Naive thymus-derived CD4-positive, alpha-beta T cell (primary cell): ENCODE measurements at regions of chr6 and their contacts with region 1.

Region 1: DNA sequence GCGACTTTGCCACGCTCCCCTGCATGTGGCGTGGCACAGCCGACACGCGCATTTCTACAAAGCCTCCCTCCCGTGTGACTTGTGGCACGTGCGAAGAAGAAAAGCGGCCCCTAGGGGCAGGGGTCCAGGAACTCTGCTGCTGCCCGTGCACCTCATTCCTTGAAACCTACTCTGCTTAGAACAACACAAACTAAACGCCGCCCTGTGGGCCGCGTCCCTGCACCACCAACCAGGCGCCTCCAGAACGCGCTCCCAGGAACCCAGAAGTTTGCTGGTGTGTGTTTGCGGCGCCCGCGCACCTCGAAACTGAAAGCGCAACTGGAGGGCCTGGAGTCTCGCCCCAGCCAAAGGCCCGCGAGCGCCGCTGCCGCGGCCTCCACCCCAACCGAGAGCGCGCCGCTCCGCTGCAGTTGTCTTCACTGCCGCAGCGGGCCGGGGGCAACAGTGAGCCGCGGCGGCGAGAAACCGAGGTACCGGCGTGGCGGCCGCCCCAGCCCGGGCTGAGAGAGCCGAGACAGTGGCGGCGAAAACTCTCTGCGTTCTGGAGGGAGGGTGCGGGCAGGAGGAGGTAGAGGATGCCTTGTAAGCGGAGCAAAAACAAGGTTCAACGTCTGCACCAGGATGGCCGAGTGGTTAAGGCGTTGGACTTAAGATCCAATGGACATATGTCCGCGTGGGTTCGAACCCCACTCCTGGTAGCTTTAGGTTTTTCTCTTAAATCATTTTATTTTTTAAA is 65.8 kb downstream of the STX11 start:
- DNase-seq: peak; percentile 84 to 96 (median 94)
- ATAC-seq: peak; percentile 91
- H3K4me3 ChIP-seq: peak overlapping the region; percentile 73
- H3K4me3 Mint-ChIP-seq: peak overlapping the region; percentile 84 to 99 (median 97)
- H3K27ac ChIP-seq: peak overlapping the region; percentile 86
- H3K27ac Mint-ChIP-seq: peak overlapping the region; percentile 91 to 100 (median 100)
- H3K4me1 ChIP-seq: peaks cover 15 to 18% of the 10 kb centered on the region in 2 donors
- H3K4me1 Mint-ChIP-seq: peaks cover 12 to 48% (median 40%) of the 10 kb centered on the region in 7 donors
- H3K27me3 ChIP-seq: no peaks in the 10 kb centered on the region
- H3K27me3 Mint-ChIP-seq: peaks cover 0 to 12% (median 0%) of the 10 kb centered on the region in 5 donors

Region 2: GRCh38 chr6:143549221-143549941 is 666.7 kb before region 1 on chr6:
- CTCF ChIA-PET with region 1: no interaction called
- POLR2A ChIA-PET with region 1: no interaction called
- intact Hi-C with region 1: loop called in 1 of 2 experiments (anchors 10 kb)
- DNase-seq: peak in 1 of 9 donors; percentile 45
- ATAC-seq: peak; percentile 47
- H3K4me3 ChIP-seq: no peak overlapping the region
- H3K4me3 Mint-ChIP-seq: peak overlapping the region in 3 of 10 donors; percentile 4 to 43 (median 10)
- H3K27ac ChIP-seq: no peak overlapping the region
- H3K27ac Mint-ChIP-seq: peak overlapping the region in 4 of 9 donors; percentile 20 to 66 (median 66)
- H3K4me1 ChIP-seq: peaks cover 43 to 71% of the 10 kb centered on the region in 2 donors
- H3K4me1 Mint-ChIP-seq: peaks cover 37 to 86% (median 73%) of the 10 kb centered on the region in 7 donors
- H3K27me3 ChIP-seq: no peaks in the 10 kb centered on the region
- H3K27me3 Mint-ChIP-seq: no peaks in the 10 kb centered on the region

Region 3: DNA sequence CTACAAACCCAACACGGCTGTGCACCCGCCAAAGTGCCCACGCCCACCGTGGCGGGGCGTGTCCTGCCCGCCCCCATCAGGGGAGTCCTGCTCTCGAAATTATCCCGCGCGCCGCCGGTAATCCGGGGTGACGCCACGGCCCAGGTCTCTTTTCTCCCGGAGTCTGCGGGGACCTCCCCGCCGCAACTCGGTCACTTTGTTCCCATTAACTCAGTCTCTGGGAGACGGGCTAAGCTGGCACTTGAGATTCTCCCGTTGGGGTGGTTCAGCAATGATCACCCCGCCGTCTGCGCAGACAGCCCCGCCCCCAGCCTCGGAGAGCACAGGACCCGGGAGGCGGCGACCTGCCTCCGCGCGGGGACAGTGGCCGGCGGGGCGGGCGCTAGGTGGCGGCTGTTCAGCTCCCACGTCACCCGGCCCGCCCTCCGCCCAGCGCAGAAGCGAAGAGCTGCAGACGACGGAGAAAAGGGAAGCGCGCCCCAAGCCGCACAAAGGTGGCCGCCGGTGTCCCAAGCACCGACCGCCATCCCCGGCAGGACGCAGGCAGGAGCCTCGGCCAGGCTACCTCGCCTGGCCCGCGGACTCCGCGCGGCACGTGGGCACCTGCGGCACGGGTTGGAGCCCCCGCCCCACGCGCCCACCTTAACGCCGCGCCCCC is 152.2 kb before region 1 on chr6:
- CTCF ChIA-PET with region 1: no interaction called
- POLR2A ChIA-PET with region 1: no interaction called
- intact Hi-C with region 1: loop called (anchors 1 kb)
- DNase-seq: peak; percentile 84 to 91 (median 88)
- ATAC-seq: peak; percentile 96
- H3K4me3 ChIP-seq: peak overlapping the region; percentile 56
- H3K4me3 Mint-ChIP-seq: peak overlapping the region; percentile 87 to 94 (median 91)
- H3K27ac ChIP-seq: peak overlapping the region; percentile 85
- H3K27ac Mint-ChIP-seq: peak overlapping the region; percentile 83 to 97 (median 88)
- H3K4me1 ChIP-seq: peaks cover 0 to 12% of the 10 kb centered on the region in 2 donors
- H3K4me1 Mint-ChIP-seq: peaks cover 17 to 44% (median 29%) of the 10 kb centered on the region in 7 donors
- H3K27me3 ChIP-seq: no peaks in the 10 kb centered on the region
- H3K27me3 Mint-ChIP-seq: peaks cover 0 to 2% (median 0%) of the 10 kb centered on the region in 5 donors

Region 4: GRCh38 chr6:144181639-144182038 is 34.5 kb before region 1 on chr6:
- CTCF ChIA-PET with region 1: no interaction called
- POLR2A ChIA-PET with region 1: no interaction called
- intact Hi-C with region 1: no loop called
- DNase-seq: no peak
- ATAC-seq: peak; percentile 56
- H3K4me3 ChIP-seq: no peak overlapping the region
- H3K4me3 Mint-ChIP-seq: no peak overlapping the region
- H3K27ac ChIP-seq: no peak overlapping the region
- H3K27ac Mint-ChIP-seq: no peak overlapping the region
- H3K4me1 ChIP-seq: no peaks in the 10 kb centered on the region
- H3K4me1 Mint-ChIP-seq: peaks cover 0 to 49% (median 14%) of the 10 kb centered on the region in 7 donors
- H3K27me3 ChIP-seq: no peaks in the 10 kb centered on the region
- H3K27me3 Mint-ChIP-seq: no peaks in the 10 kb centered on the region

Region 5: GRCh38 chr6:144284783-144285547 is 68.9 kb after region 1 on chr6 and contains the start of gene UTRN:
- CTCF ChIA-PET with region 1: no interaction called
- POLR2A ChIA-PET with region 1: no interaction called
- intact Hi-C with region 1: loop called (anchors 1 kb)
- DNase-seq: peak; percentile 7 to 62 (median 30)
- ATAC-seq: peak; percentile 66
- H3K4me3 ChIP-seq: peak within 1 kb of the TSS; percentile 85
- H3K4me3 Mint-ChIP-seq: peak within 1 kb of the TSS; percentile 76 to 96 (median 92)
- H3K27ac ChIP-seq: no peak within 1 kb of the TSS
- H3K27ac Mint-ChIP-seq: peak within 1 kb of the TSS in 7 of 9 donors; percentile 22 to 82 (median 60)
- H3K4me1 ChIP-seq: peaks cover 10 to 14% of the 10 kb centered on the region in 2 donors
- H3K4me1 Mint-ChIP-seq: peaks cover 12 to 25% (median 15%) of the 10 kb centered on the region in 7 donors
- H3K27me3 ChIP-seq: no peaks in the 10 kb centered on the region
- H3K27me3 Mint-ChIP-seq: peaks cover 6 to 47% (median 18%) of the 10 kb centered on the region in 5 donors
- total RNA-seq, gene UTRN: 148 to 280 (median 153) TPM

Region 6: GRCh38 chr6:144469144-144469575 is 253.1 kb after region 1 on chr6:
- CTCF ChIA-PET with region 1: no interaction called
- POLR2A ChIA-PET with region 1: no interaction called
- intact Hi-C with region 1: loop called in 1 of 2 experiments (anchors 5 kb)
- DNase-seq: no peak
- ATAC-seq: no peak
- H3K4me3 ChIP-seq: peak overlapping the region; percentile 10
- H3K4me3 Mint-ChIP-seq: peak overlapping the region in 8 of 10 donors; percentile 33 to 82 (median 65)
- H3K27ac ChIP-seq: peak overlapping the region; percentile 12
- H3K27ac Mint-ChIP-seq: peak overlapping the region; percentile 9 to 87 (median 79)
- H3K4me1 ChIP-seq: peaks cover 11 to 14% of the 10 kb centered on the region in 2 donors
- H3K4me1 Mint-ChIP-seq: peaks cover 11 to 34% (median 29%) of the 10 kb centered on the region in 7 donors
- H3K27me3 ChIP-seq: no peaks in the 10 kb centered on the region
- H3K27me3 Mint-ChIP-seq: no peaks in the 10 kb centered on the region

Region 7: GRCh38 chr6:145963216-145964068 is 1747.3 kb after region 1 on chr6:
- CTCF ChIA-PET with region 1: no interaction called
- POLR2A ChIA-PET with region 1: no interaction called
- intact Hi-C with region 1: loop called in 1 of 2 experiments (anchors 10 kb)
- DNase-seq: peak in 6 of 9 donors; percentile 20 to 44 (median 30)
- ATAC-seq: peak; percentile 11
- H3K4me3 ChIP-seq: peak overlapping the region; percentile 88
- H3K4me3 Mint-ChIP-seq: peak overlapping the region; percentile 90 to 99 (median 98)
- H3K27ac ChIP-seq: peak overlapping the region; percentile 84
- H3K27ac Mint-ChIP-seq: peak overlapping the region; percentile 91 to 100 (median 98)
- H3K4me1 ChIP-seq: peaks cover 20 to 26% of the 10 kb centered on the region in 2 donors
- H3K4me1 Mint-ChIP-seq: peaks cover 30 to 72% (median 56%) of the 10 kb centered on the region in 7 donors
- H3K27me3 ChIP-seq: no peaks in the 10 kb centered on the region
- H3K27me3 Mint-ChIP-seq: no peaks in the 10 kb centered on the region